ENCODE measurements at regions of chr11 and their contacts with region 1.

Region 1: GRCh38 chr11:83249972-83250593 is 36.1 kb downstream of the CCDC90B start:
- DNase-seq: no peak
- ATAC-seq: peak in 1 of 2 donors; percentile 43
- H3K4me3 ChIP-seq: no peak overlapping the region
- H3K27ac ChIP-seq: no peak overlapping the region
- H3K4me1 ChIP-seq: no peaks in the 10 kb centered on the region
- H3K27me3 ChIP-seq: no peaks in the 10 kb centered on the region

Region 2: GRCh38 chr11:82906244-82906654 is 343.8 kb before region 1 on chr11:
- intact Hi-C with region 1: loop called (anchors 5 to 10 kb)
- DNase-seq: no peak
- ATAC-seq: no peak
- H3K4me3 ChIP-seq: no peak overlapping the region
- H3K27ac ChIP-seq: no peak overlapping the region
- H3K4me1 ChIP-seq: no peaks in the 10 kb centered on the region
- H3K27me3 ChIP-seq: no peaks in the 10 kb centered on the region